Naive thymus-derived CD8-positive, alpha-beta T cell (primary cell): ENCODE measurements at regions of chr16 and their contacts with region 1.

Region 1: DNA sequence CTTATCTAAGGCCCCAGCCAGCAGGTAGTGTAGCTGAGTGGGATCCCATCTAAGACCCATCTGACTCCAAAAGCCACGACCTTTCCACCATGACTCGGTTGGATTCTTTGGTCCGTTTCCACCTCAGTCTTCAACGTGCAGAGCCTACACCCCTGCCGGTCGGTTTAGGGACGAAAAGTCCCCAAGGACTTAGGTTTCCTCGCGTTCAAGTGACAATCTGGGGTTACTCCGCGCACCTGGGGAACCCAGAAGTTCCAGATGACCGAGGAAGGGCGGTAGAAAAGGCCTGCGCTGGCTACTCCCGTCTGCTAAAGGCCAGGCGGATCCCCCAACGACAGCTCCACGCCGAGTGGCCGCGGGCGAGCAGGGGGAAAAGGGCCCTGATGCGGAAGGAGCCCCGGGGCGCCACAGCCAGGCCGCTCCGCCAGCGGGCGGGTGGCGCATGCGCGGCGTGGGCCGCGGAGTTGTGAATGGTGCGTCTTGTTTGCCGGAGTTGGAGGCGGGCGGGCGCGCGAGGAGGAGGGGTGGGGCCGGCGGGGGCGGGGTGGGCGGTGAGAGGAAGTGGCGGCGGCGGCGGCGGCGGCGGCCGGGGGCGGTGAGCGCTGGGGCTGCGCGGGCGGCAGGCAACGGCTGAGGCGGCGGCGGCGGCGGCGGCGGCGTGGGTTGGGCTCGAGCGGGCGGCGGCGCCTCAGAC is at the start of gene CBFB:
- DNase-seq: peak; percentile 89 to 97 (median 94)
- ATAC-seq: peak; percentile 87 to 88
- H3K4me3 Mint-ChIP-seq: peak within 1 kb of the TSS; percentile 80 to 93 (median 90)
- H3K27ac Mint-ChIP-seq: peak within 1 kb of the TSS; percentile 88 to 98 (median 97)
- H3K4me1 Mint-ChIP-seq: peaks cover 2 to 50% (median 41%) of the 10 kb centered on the region in 4 donors
- H3K27me3 Mint-ChIP-seq: no peaks in the 10 kb centered on the region
- polyA plus RNA-seq, gene CBFB: 61.2 to 79.8 (median 73.5) TPM

Region 2: DNA sequence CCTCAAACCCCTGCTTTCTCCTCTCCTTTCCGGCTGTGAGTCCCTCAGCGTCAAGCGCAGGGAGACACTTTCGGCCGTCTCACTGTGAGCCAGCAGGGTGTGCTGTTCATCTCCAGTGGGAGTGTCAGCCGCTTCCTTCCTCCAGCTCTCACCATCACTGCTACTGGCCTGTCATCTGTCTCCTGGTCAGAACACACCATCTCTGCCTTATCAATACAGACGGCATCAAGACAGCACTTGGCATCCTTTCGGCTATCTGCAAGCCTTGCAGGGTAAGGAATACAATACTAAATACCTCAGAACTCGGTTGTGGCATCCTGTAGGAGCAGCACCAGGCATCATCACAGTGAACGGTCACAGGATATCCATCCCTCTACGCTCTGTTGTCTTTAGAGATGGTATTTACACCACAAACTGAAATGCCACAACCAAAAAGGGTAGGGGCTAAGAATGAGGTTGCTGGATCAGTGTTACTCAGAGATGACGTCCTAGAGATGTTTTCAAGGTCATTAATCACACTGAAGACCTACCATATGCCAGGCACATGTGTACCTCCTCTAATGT is 311.5 kb before region 1 on chr16:
- POLR2A ChIA-PET with region 1: no interaction called
- DNase-seq: no peak
- ATAC-seq: no peak
- H3K4me3 Mint-ChIP-seq: no peak overlapping the region
- H3K27ac Mint-ChIP-seq: peak overlapping the region in 1 of 10 donors; percentile 14
- H3K4me1 Mint-ChIP-seq: peaks cover 0 to 3% (median under 1%) of the 10 kb centered on the region in 4 donors
- H3K27me3 Mint-ChIP-seq: peaks cover 0 to 7% (median 3%) of the 10 kb centered on the region in 5 donors

Region 3: GRCh38 chr16:67017810-67018488 is 10.8 kb before region 1 on chr16:
- POLR2A ChIA-PET with region 1: interaction called, 25 read pairs
- DNase-seq: peak; percentile 67 to 90 (median 78)
- ATAC-seq: peak; percentile 77 to 89
- H3K4me3 Mint-ChIP-seq: no peak overlapping the region
- H3K27ac Mint-ChIP-seq: peak overlapping the region in 3 of 10 donors; percentile 33 to 83 (median 37)
- H3K4me1 Mint-ChIP-seq: peaks cover 0 to 9% (median 7%) of the 10 kb centered on the region in 4 donors
- H3K27me3 Mint-ChIP-seq: peaks cover 0 to 2% (median 0%) of the 10 kb centered on the region in 5 donors

Region 4: DNA sequence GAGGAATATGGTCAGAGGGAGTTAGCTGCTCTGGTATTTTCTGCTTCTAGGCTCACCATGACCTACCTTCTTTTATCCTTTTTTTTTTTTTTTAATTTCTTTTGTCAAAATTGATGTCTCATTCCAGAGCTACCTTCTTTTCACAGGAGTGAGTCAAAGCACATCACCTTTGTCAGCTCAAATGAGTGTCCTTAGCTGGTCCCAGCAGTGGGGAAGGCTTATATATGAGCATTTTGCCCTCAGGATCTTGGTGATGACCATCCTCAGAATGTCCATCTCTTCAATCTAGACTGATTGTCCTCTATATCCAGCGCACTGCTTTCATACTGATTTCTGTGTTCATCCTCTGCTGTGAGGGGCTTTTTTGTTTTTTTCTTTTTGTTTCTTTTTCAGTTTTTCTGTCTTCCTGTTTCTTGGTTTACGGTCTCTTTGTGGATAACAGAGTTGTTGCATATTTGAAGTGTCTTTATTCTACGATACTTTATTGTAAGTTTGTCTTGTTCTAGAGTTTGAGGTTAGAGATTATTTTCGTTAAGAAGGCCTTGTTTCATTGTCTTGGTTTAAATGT is 25.1 kb after region 1 on chr16:
- POLR2A ChIA-PET with region 1: interaction called, 26 read pairs
- DNase-seq: peak in 3 of 10 donors; percentile 38 to 55 (median 49)
- ATAC-seq: peak; percentile 54 to 64
- H3K4me3 Mint-ChIP-seq: peak overlapping the region; percentile 59 to 94 (median 77)
- H3K27ac Mint-ChIP-seq: peak overlapping the region; percentile 86 to 96 (median 93)
- H3K4me1 Mint-ChIP-seq: peaks cover 16 to 53% (median 41%) of the 10 kb centered on the region in 4 donors
- H3K27me3 Mint-ChIP-seq: no peaks in the 10 kb centered on the region